ENCODE measurements at regions of chr2 and their contacts with region 1.

Region 1: DNA sequence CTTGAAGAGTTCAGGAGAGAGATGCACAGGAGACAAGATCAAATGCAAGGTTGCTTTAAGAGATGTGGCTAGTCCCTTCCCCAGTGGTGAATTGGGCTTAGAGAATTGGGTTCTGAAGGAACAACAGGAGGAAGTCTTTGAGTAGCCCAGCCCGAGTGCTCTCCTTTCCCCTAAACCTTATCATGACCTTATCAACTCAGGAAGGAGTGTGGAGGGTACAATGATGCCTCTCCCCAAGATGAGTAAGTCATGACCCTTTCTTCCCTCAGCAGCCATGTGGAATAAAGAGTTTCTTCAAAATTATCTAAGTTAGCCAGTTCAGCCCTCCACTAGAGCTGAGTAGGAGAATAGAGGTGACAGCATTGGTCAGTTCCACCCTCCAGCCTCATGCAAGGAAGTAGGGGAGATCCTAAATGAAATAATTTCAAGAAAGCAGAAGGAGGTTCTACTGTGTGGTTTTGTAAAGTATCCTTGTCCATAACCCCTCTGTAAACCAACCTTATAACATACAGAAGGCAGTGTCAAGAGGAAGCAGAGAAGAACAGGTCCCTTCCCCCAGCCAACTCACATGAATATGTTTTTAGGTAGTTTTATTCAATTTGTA is 88.4 kb downstream of the ARHGAP15 start:
- H3K4me3 Mint-ChIP-seq: no peak overlapping the region
- H3K27ac Mint-ChIP-seq: no peak overlapping the region
- H3K4me1 Mint-ChIP-seq: peaks cover 12% of the 10 kb centered on the region
- H3K27me3 Mint-ChIP-seq: no peaks in the 10 kb centered on the region

Region 2: DNA sequence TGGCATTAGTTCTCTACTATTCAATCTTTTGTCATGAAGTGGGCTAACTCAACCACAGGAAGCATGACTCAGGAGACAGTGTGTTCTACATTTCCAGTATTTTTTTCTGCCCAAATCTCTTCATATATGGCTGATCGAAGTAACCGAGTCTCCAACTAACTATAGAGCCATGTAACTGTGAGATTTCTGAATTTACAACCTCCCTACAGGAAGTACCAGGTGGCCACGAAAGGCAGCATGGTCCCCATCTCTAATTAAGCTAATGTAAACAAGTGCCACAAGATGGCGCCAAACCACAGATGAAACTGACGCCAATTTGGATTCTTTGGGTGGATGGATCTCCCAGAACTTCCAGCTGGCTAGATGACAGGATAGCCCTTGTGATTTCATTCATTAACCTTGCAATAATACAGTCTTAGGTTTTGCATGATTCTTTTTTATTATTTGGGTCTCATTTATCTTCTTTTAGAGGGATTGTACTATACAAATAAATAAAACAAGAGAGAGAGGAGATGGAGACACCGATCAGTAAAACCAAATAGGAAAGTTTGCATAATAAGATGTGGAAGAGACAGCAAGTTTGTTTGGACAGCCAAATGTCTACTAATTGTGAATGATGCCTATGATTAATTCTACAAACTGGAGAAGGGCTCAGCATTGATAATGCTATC is 106.7 kb before region 1 on chr2:
- intact Hi-C with region 1: loop called (anchors 1 kb)
- H3K4me3 Mint-ChIP-seq: no peak overlapping the region
- H3K27ac Mint-ChIP-seq: no peak overlapping the region
- H3K4me1 Mint-ChIP-seq: peaks cover 5% of the 10 kb centered on the region
- H3K27me3 Mint-ChIP-seq: no peaks in the 10 kb centered on the region

Region 3: GRCh38 chr2:143246815-143247744 is 29.5 kb after region 1 on chr2:
- intact Hi-C with region 1: no loop called
- H3K4me3 Mint-ChIP-seq: no peak overlapping the region
- H3K27ac Mint-ChIP-seq: no peak overlapping the region
- H3K4me1 Mint-ChIP-seq: no peaks in the 10 kb centered on the region
- H3K27me3 Mint-ChIP-seq: no peaks in the 10 kb centered on the region

Measured in dendritic cell treated with granulocyte-macrophage colony-stimulating factor and Interleukin-4, amounts not matched to agents 40 ng/mL and 50 ng/mL, for 4 days (primary cell).